ENCODE measurements at regions of chr1 and their contacts with region 1.

Region 1: GRCh38 chr1:51897699-51898031 is 19.1 kb upstream of the NRDC start:
- DNase-seq: no peak
- H3K4me3 Mint-ChIP-seq: no peak overlapping the region
- H3K27ac Mint-ChIP-seq: no peak overlapping the region
- H3K4me1 Mint-ChIP-seq: no peaks in the 10 kb centered on the region
- H3K27me3 Mint-ChIP-seq: peaks cover 32% of the 10 kb centered on the region

Region 2: GRCh38 chr1:51833700-51834099 is 64.0 kb before region 1 on chr1:
- CTCF ChIA-PET with region 1: no interaction called
- POLR2A ChIA-PET with region 1: no interaction called
- intact Hi-C with region 1: no loop called
- DNase-seq: no peak
- H3K4me3 Mint-ChIP-seq: no peak overlapping the region
- H3K27ac Mint-ChIP-seq: no peak overlapping the region
- H3K4me1 Mint-ChIP-seq: no peaks in the 10 kb centered on the region
- H3K27me3 Mint-ChIP-seq: no peaks in the 10 kb centered on the region

Region 3: DNA sequence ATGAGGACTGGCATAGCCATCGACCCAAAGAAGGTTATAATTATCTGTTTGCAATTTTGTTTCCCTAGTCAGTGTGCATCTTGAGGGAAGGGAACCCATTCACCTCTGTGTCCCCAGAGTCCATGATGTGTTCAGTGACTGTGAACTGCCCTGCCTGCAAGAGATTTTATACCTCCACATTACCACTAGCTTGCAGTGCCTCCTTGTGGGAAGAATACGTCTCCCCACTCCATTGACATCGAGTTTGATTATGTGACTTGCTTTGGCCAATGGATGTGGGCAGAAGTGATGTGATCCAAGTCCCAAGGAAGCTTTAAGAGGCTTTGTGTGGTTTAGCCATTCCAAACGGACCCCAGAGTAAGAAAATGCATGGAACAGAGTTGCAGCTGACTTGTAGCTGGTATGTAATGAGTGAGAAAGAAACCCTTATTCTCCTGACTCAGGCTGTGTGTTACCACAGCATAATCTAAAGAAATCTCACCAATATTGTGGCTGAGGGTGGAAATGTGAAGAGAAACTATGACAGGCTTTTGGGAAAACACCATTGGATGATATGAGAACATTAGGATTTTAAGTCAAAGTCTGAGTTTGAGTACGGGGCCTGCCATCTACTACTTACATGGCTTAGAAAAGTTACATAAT is 28.6 kb after region 1 on chr1:
- CTCF ChIA-PET with region 1: interaction called, 21 read pairs
- POLR2A ChIA-PET with region 1: no interaction called
- intact Hi-C with region 1: no loop called
- DNase-seq: peak; percentile 14
- H3K4me3 Mint-ChIP-seq: no peak overlapping the region
- H3K27ac Mint-ChIP-seq: no peak overlapping the region
- H3K4me1 Mint-ChIP-seq: no peaks in the 10 kb centered on the region
- H3K27me3 Mint-ChIP-seq: peaks cover 5% of the 10 kb centered on the region

Region 4: GRCh38 chr1:51936531-51936930 is 38.9 kb after region 1 on chr1:
- CTCF ChIA-PET with region 1: interaction called, 3 read pairs
- POLR2A ChIA-PET with region 1: no interaction called
- intact Hi-C with region 1: loop called (anchors 5 kb)
- DNase-seq: no peak
- H3K4me3 Mint-ChIP-seq: no peak overlapping the region
- H3K27ac Mint-ChIP-seq: no peak overlapping the region
- H3K4me1 Mint-ChIP-seq: no peaks in the 10 kb centered on the region
- H3K27me3 Mint-ChIP-seq: peaks cover 2% of the 10 kb centered on the region

Region 5: GRCh38 chr1:52002038-52002917 is 104.6 kb after region 1 on chr1:
- CTCF ChIA-PET with region 1: interaction called, 58 read pairs
- POLR2A ChIA-PET with region 1: no interaction called
- intact Hi-C with region 1: loop called (anchors 1 kb)
- DNase-seq: peak; percentile 40
- H3K4me3 Mint-ChIP-seq: no peak overlapping the region
- H3K27ac Mint-ChIP-seq: no peak overlapping the region
- H3K4me1 Mint-ChIP-seq: no peaks in the 10 kb centered on the region
- H3K27me3 Mint-ChIP-seq: peaks cover 11% of the 10 kb centered on the region

Region 6: DNA sequence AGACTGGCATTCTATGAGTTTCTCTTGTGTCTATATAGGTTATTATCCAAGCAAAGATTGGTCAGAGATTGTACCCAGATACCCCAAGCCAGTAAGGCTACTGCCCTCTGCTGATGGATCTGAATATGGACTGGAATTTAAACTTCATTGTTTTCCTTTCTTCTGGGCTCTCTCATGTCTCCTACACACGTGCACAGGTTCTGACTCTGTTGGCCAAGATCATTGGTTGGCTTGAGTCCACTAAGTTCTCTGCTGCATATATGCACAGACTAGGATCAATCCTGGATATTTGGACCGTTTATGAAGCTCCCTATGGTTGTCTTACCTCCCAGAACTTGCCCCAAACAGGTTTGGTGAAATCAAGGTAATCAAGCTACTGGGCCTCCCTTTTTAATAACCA is 398.7 kb after region 1 on chr1:
- CTCF ChIA-PET with region 1: no interaction called
- POLR2A ChIA-PET with region 1: no interaction called
- intact Hi-C with region 1: loop called (anchors 5 kb)
- DNase-seq: no peak
- H3K4me3 Mint-ChIP-seq: no peak overlapping the region
- H3K27ac Mint-ChIP-seq: no peak overlapping the region
- H3K4me1 Mint-ChIP-seq: no peaks in the 10 kb centered on the region
- H3K27me3 Mint-ChIP-seq: no peaks in the 10 kb centered on the region